Posterior vena cava (tissue), 2 donors: ENCODE measurements at regions of chr11 and their contacts with region 1.

Region 1: GRCh38 chr11:69102732-69103615 is 52.8 kb upstream of the SMIM38 start:
- DNase-seq: no peak

Region 2: GRCh38 chr11:69211920-69212571 is 109.1 kb after region 1 on chr11:
- intact Hi-C with region 1: loop called in 1 of 2 experiments (anchors 5 kb)
- DNase-seq: peak; percentile 48

Region 3: GRCh38 chr11:69642913-69643632 is 540.1 kb after region 1 on chr11:
- intact Hi-C with region 1: loop called (anchors 2 kb)
- DNase-seq: peak; percentile 94

Region 4: DNA sequence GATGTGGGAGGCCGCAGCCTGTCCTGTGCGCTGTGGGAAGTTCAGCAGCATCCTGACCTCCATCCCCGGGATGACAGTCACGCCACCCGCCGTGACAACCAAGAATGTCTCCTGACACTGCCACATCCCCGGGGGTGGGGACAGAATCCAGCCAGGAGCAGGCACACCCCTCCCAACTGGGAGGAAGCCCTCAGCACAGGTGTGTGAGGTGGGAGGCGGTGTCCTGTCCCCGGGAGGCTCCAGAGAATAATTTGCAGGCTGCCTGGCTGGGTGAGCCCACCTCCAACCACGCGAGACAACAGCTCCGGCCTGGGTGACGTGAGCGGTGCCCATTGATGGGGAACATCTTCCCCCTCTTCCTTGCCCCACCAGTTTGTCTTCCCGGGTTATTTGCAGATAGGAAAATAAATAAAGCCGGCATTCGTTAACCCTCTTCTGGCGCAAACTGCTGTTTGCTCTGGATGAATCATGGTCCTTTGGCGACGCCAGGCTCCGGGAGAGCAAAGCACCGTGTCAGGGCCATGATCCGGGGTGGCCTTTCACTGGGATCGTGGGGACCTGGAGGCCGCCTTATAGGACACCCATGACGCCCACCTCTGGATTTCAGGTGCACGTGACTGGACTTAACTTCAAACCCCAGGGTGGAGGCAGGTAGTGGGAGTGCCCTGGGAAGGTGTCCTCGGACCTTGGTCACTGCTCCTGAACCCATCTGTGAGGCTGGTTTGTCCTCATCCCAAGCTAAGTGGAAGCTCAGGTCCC is 551.8 kb after region 1 on chr11:
- intact Hi-C with region 1: loop called in 1 of 2 experiments (anchors 2 kb)
- DNase-seq: peak; percentile 55